GM10248 (cell line): ENCODE measurements at regions of chr19 and their contacts with region 1.

Region 1: DNA sequence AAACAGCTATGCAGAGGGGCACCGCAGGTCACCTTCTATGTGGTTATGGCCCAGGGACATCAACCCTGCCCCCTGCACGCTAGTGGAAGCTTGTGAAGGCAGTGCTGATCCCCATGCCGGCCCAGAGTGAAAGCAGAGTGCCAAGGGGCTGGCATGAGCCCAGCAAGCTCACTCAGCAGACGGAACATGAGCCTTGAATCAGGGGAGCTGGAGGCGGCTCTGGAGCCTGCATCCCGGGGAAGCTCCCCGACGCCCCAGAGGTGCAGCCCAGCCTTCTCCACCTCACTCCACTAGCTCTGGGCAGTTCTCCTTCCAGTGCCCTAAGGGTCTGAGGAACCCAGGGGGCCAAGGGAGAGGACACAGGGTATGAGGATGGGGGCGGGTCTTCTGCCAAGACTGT is 19.0 kb upstream of the ISYNA1 start:
- DNase-seq: no peak
- CTCF ChIP-seq: no peak

Region 2: GRCh38 chr19:18239303-18239702 is 217.7 kb before region 1 on chr19:
- CTCF ChIA-PET with region 1: no interaction called
- POLR2A ChIA-PET with region 1: no interaction called
- DNase-seq: no peak
- CTCF ChIP-seq: no peak

Region 3: DNA sequence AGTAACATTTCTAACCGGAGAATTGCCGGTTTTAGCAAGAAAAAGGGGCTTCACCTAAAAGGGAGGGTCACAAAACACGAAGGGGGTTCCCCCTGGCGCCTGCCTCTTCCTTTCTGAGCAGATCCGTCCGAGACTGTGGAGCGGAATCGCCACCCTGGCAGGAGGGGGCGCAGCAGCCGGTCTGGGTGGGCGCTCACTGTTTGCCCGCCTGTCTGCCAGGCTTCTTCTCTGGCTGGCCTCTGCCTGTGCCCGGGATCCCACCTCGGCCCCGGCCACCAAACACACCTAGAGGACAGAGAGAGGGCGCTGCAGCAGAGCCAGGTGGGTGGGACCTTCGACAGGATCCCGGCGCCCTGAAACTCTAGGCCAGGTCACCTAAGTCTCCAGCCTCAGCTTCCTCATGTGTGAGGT is 149.7 kb before region 1 on chr19:
- CTCF ChIA-PET with region 1: no interaction called
- POLR2A ChIA-PET with region 1: no interaction called
- DNase-seq: no peak
- CTCF ChIP-seq: no peak

Region 4: DNA sequence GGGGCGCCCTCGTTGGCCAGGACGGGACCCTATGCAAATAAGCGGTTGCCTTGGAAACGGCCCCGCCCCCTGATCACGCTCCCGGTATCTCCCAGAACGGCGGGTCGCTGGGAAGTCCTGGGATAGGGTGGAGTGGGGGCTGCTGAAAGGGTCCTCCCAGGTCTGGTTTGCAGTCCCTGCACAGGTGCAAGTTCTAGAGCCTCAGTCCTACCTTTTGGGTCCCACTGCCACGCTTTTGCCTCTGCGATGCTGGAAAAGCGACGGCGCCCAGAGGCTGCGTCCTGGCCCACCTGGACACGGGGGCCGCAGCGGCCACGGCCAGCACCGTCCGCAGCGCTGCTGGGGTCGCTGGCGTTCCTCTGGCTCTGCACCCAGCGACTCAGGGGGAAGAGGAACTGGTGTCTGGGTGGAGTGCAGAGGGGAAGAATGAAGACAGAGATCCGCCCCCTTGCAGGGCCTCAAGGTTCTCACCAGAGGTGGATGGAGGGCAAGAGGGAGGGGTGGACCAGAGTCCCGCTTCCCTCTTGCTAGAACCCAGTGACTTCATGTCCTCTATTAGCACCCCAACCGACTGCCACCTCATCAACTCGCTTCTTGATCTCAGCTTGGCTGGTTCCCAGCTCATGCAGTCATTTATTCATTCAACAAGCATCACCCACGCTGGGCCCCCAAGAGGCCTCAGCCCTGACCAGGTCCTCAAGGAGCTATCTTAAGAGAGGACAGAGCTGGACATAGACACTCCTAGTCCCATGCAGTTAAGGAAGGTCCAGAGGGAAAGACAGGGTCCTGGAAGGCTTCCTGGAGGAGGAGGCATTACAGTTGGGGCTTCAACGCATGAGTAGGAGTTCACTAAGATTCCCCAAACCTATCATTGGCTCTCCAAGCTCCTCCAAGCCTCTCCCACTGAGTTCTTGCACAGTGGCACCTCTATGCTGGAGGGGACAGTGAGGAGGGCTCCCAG is 59.5 kb before region 1 on chr19 and contains the start of gene LRRC25:
- CTCF ChIA-PET with region 1: no interaction called
- POLR2A ChIA-PET with region 1: no interaction called
- DNase-seq: peak; percentile 77
- CTCF ChIP-seq: no peak

Region 5: GRCh38 chr19:18428787-18429674 is 27.9 kb before region 1 on chr19:
- CTCF ChIA-PET with region 1: no interaction called
- POLR2A ChIA-PET with region 1: no interaction called
- DNase-seq: peak; percentile 93
- CTCF ChIP-seq: no peak

Region 6: DNA sequence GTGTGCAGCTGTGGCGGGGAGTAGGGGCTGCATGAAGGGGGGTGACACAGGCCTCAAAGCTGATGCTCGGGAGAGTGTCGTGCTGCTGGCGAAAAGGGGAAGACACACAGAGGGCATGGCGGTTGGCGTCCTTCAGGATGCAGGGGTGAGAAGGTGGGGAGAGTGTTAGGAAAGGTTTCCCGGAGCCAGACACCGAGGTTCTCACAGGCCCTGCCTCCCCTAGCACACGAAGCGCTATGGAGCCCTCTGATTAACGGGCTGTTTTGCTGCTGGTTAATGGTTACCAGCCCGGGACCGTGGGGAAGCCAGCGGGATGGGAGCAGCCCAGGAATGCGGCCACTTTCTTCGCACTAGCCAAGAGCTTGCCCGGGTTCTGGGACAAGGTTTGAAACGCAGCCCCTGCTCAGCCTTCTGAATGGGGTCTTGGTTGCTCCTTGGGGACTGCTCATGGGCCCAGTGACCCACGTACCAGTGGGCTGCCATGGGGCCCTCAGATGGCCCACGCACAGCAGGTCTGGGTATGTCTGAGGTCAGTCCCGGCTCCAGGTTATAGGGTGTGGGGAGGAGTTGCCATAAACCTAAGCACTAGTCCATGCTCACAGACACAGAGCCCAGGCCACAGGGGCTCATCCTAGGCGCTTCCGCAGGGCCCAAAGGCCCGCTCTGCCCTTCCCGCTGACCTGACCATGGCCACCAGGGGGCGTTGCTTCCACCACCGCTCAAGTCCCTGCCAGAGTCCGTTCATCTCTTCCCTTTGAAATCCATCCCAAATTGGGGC is 12.3 kb after region 1 on chr19:
- CTCF ChIA-PET with region 1: interaction called, 16 read pairs
- POLR2A ChIA-PET with region 1: no interaction called
- DNase-seq: peak; percentile 65
- CTCF ChIP-seq: peak; percentile 71

Region 7: GRCh38 chr19:18478569-18479311 is 21.8 kb after region 1 on chr19:
- CTCF ChIA-PET with region 1: interaction called, 21 read pairs
- POLR2A ChIA-PET with region 1: no interaction called
- DNase-seq: peak; percentile 90
- CTCF ChIP-seq: no peak